Right ventricle myocardium superior (tissue), 1 donor: ENCODE measurements at regions of chr1 and their contacts with region 1.

Region 1: GRCh38 chr1:228131766-228132165 is 8.3 kb upstream of the GUK1 start:
- DNase-seq: no peak
- ATAC-seq: no peak

Region 2: GRCh38 chr1:228510101-228510802 is 378.5 kb after region 1 on chr1:
- intact Hi-C with region 1: loop called (anchors 5 kb)
- DNase-seq: no peak
- ATAC-seq: no peak